Activated naive CD4-positive, alpha-beta T cell treated with anti-CD3 and anti-CD28 coated beads for 36 hours (primary cell): ENCODE measurements at regions of chr19 and their contacts with region 1.

Region 1: DNA sequence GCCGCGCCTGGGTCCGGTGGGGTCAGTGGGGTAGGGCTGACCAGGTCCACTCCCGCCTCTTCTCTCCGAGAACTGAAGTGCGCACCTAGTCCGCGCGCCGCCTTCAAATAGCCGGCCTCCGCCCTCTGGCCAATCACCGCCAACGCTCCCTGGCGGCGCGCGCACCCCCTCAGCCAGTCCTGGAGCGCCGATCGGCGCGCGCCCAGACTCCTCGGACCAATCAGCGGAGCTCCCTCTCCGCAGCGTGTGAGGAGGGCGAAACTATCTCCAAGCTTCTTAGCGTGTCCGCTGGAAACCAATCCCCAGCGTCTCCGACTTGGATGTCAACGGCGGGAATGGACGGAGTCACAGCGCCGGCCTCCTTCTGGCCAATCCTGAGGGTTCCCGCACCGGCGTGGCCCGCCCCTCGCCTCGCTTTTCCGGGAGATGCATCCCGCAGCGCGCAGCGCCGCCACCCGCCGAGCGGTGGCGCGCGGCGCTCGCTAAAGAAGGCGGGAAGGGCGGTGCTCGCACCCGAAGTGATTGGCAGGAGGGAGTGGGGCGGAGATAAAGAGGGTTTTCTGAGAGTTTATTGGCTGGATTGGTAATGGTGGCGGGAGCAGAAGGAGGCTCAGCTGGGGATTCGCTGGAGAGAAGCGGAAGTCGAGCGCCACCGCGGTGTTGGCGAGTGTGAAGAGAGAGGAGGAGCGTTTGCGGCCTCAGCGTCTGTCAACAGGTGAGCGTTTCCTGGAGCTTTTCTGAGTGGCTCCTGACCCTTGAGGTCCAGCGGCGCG is at the start of gene ASF1B:
- DNase-seq: peak; percentile 99
- H3K4me3 Mint-ChIP-seq: peak within 1 kb of the TSS; percentile 83
- H3K27ac Mint-ChIP-seq: peak within 1 kb of the TSS; percentile 91
- H3K4me1 Mint-ChIP-seq: peaks cover 41% of the 10 kb centered on the region
- H3K27me3 Mint-ChIP-seq: no peaks in the 10 kb centered on the region
- total RNA-seq, gene ASF1B: 54.7 to 56.6 TPM

Region 2: GRCh38 chr19:13952154-13953035 is 184.3 kb before region 1 on chr19 and contains the start of gene DCAF15:
- CTCF ChIA-PET with region 1: interaction called, 3 read pairs
- intact Hi-C with region 1: loop called (anchors 1 kb)
- DNase-seq: peak; percentile 100
- H3K4me3 Mint-ChIP-seq: peak within 1 kb of the TSS; percentile 96
- H3K27ac Mint-ChIP-seq: peak within 1 kb of the TSS; percentile 84
- H3K4me1 Mint-ChIP-seq: peaks cover 17% of the 10 kb centered on the region
- H3K27me3 Mint-ChIP-seq: no peaks in the 10 kb centered on the region
- total RNA-seq, gene DCAF15: 67.7 to 70.6 TPM

Region 3: DNA sequence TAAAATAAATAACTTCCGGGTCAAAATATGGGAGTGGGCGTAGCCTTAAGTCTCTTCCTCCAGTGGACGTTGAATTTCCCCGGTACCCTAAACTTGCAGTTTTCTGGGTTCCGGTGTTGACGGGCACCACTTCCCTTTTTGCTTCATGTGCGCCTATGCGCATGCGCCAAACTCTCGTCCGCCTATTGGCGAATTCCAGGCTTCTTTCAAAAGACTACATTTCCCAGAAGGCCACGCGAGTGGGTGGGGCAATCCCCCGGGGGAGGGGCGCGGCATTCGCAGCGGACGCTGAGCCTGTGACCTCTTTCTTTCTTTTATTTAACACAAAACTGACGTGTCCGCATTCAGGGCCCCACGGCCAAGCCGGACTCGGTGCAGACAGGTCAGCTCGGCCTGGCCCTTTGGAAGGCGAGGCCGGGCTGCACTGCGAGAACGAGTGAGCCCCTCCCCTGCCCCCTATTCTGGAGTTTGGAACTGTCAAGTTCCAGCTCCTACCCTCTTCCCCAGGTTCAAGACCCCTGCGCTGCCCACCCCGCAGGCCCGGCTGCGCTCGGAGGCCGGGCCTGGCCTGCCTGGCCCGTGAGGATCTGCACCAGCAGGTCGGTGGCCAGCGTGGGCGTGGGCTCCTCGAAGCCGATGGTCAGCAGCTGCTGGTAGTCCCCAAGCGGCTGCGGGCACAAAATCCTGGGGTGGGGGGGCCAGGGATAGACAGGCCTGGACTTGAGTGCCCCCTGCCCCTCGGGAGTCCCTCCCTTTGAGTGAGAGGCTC is 55.2 kb before region 1 on chr19:
- CTCF ChIA-PET with region 1: interaction called, 4 read pairs
- intact Hi-C with region 1: loop called (anchors 1 kb)
- DNase-seq: peak; percentile 100
- H3K4me3 Mint-ChIP-seq: peak overlapping the region; percentile 95
- H3K27ac Mint-ChIP-seq: peak overlapping the region; percentile 91
- H3K4me1 Mint-ChIP-seq: peaks cover 11% of the 10 kb centered on the region
- H3K27me3 Mint-ChIP-seq: no peaks in the 10 kb centered on the region

Region 4: GRCh38 chr19:14147797-14148605 is 11.3 kb after region 1 on chr19:
- CTCF ChIA-PET with region 1: interaction called, 13 read pairs
- intact Hi-C with region 1: loop called (anchors 1 kb)
- DNase-seq: peak; percentile 69
- H3K4me3 Mint-ChIP-seq: peak overlapping the region; percentile 12
- H3K27ac Mint-ChIP-seq: peak overlapping the region; percentile 93
- H3K4me1 Mint-ChIP-seq: peaks cover 48% of the 10 kb centered on the region
- H3K27me3 Mint-ChIP-seq: no peaks in the 10 kb centered on the region

Region 5: DNA sequence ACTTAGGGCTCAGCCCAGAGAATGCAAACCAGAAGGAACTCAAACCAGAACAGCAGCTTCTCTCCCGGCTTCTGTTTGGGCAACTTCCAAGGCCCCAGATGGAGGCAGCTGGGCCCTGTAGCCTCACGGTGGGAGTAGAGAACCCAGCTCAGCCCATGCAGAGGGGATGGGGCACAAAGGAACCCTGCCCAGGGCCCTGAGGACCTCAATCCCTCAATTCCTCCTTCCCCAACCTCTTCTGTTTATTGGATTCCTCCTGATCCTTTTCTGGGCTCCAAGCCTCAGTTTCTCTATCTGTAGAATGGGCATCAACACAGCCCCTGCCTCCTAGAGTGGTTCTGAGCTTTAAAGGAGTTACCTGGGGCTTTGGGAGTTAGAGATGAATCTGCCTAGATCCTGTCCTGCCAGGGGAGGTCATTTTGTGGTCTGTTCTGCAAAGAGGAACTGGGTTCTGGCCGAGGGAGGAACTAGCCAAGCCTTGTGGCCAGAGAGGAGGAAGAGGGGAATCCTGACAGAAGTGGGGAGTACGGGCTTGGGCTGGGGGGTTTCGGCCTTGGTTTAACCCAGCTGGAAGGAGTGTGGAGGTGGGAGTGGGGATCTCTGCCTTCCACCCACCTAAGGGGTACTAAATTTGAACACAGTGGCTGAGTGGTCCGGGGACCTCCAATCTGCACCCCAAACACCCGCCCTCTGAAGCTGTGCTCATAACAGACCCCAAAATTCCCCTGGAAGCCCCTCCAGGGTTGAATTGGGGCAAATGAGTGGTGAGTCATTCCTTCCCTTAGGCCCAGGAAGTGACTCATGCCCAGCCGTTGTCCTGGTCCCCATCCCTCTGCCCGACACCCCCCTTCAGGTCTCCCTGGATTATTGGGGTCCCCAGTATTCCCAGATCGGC is 247.2 kb after region 1 on chr19:
- CTCF ChIA-PET with region 1: no interaction called
- intact Hi-C with region 1: loop called (anchors 1 kb)
- DNase-seq: peak; percentile 79
- H3K4me3 Mint-ChIP-seq: peak overlapping the region; percentile 97
- H3K27ac Mint-ChIP-seq: peak overlapping the region; percentile 100
- H3K4me1 Mint-ChIP-seq: peaks cover 36% of the 10 kb centered on the region
- H3K27me3 Mint-ChIP-seq: no peaks in the 10 kb centered on the region

Region 6: GRCh38 chr19:14472202-14472938 is 335.7 kb after region 1 on chr19:
- CTCF ChIA-PET with region 1: interaction called, 3 read pairs
- intact Hi-C with region 1: loop called (anchors 2 kb)
- DNase-seq: peak; percentile 83
- H3K4me3 Mint-ChIP-seq: no peak overlapping the region
- H3K27ac Mint-ChIP-seq: no peak overlapping the region
- H3K4me1 Mint-ChIP-seq: peaks cover 31% of the 10 kb centered on the region
- H3K27me3 Mint-ChIP-seq: peaks cover 19% of the 10 kb centered on the region